Natural killer cell (primary cell): ENCODE measurements at regions of chr12 and their contacts with region 1.

Region 1: GRCh38 chr12:62581288-62582064 is 114.8 kb downstream of the MON2 start:
- DNase-seq: peak in 1 of 2 donors; percentile 70
- ATAC-seq: peak; percentile 46 to 72 (median 62)
- H3K4me3 ChIP-seq: no peak overlapping the region
- H3K4me3 Mint-ChIP-seq: no peak overlapping the region
- H3K27ac ChIP-seq: no peak overlapping the region
- H3K27ac Mint-ChIP-seq: no peak overlapping the region
- H3K4me1 ChIP-seq: no peaks in the 10 kb centered on the region
- H3K4me1 Mint-ChIP-seq: no peaks in the 10 kb centered on the region
- H3K27me3 ChIP-seq: no peaks in the 10 kb centered on the region
- H3K27me3 Mint-ChIP-seq: no peaks in the 10 kb centered on the region
- CTCF ChIP-seq: peak; percentile 65

Region 2: GRCh38 chr12:62660756-62661155 is 79.3 kb after region 1 on chr12:
- intact Hi-C with region 1: no loop called
- DNase-seq: no peak
- ATAC-seq: no peak
- H3K4me3 ChIP-seq: no peak overlapping the region
- H3K4me3 Mint-ChIP-seq: no peak overlapping the region
- H3K27ac ChIP-seq: no peak overlapping the region
- H3K27ac Mint-ChIP-seq: no peak overlapping the region
- H3K4me1 ChIP-seq: peaks cover 3% of the 10 kb centered on the region
- H3K4me1 Mint-ChIP-seq: no peaks in the 10 kb centered on the region
- H3K27me3 ChIP-seq: no peaks in the 10 kb centered on the region
- H3K27me3 Mint-ChIP-seq: peaks cover 8 to 10% of the 10 kb centered on the region in 2 donors
- CTCF ChIP-seq: no peak

Region 3: GRCh38 chr12:62793256-62794217 is 212.1 kb after region 1 on chr12:
- intact Hi-C with region 1: loop called (anchors 1 kb)
- DNase-seq: peak; percentile 65 to 81
- ATAC-seq: peak; percentile 77 to 81 (median 77)
- H3K4me3 ChIP-seq: no peak overlapping the region
- H3K4me3 Mint-ChIP-seq: no peak overlapping the region
- H3K27ac ChIP-seq: no peak overlapping the region
- H3K27ac Mint-ChIP-seq: no peak overlapping the region
- H3K4me1 ChIP-seq: no peaks in the 10 kb centered on the region
- H3K4me1 Mint-ChIP-seq: no peaks in the 10 kb centered on the region
- H3K27me3 ChIP-seq: no peaks in the 10 kb centered on the region
- H3K27me3 Mint-ChIP-seq: no peaks in the 10 kb centered on the region
- CTCF ChIP-seq: peak; percentile 97